Spleen (tissue), 13 donors: ENCODE measurements at regions of chr6 and their contacts with region 1.

Region 1: DNA sequence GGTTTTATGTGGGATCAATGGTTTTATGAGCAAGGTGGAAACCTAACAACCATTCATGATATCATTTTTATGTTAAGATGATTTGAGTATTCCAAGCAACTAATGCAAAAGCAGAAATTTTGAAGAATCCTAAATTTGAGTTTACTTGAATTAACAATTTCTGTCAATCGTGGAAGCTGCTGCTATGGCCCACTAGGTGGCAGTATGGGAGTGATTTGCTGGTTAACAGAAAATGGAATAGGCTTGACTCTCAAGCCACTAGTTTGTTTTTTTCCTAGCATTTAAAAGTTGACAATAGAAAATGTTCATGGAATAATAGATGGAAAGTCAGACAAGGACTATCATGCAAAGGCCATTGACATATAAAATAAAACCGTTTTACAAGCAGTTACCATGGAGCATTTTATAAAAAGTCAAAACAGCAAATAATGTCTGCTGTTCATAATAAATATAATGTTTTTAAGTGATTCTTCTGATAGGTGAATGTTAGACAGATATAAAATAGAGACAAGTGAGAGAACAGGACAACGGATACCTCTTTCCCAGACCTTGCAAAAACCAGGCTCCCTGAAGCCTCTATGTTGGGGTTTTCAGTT is 43.0 kb upstream of the TMEM200A start:
- DNase-seq: no peak
- H3K4me3 ChIP-seq: no peak overlapping the region
- H3K27ac ChIP-seq: no peak overlapping the region
- H3K4me1 ChIP-seq: peaks cover 0 to 6% (median 0%) of the 10 kb centered on the region in 6 donors
- H3K27me3 ChIP-seq: no peaks in the 10 kb centered on the region
- CTCF ChIP-seq: peak; percentile 32 to 84 (median 73)
- POLR2A ChIP-seq: no peak

Region 2: GRCh38 chr6:130620338-130620781 is 297.6 kb after region 1 on chr6:
- intact Hi-C with region 1: no loop called
- DNase-seq: no peak
- H3K4me3 ChIP-seq: no peak overlapping the region
- H3K27ac ChIP-seq: no peak overlapping the region
- H3K4me1 ChIP-seq: no peaks in the 10 kb centered on the region
- H3K27me3 ChIP-seq: no peaks in the 10 kb centered on the region
- CTCF ChIP-seq: no peak
- POLR2A ChIP-seq: no peak

Region 3: DNA sequence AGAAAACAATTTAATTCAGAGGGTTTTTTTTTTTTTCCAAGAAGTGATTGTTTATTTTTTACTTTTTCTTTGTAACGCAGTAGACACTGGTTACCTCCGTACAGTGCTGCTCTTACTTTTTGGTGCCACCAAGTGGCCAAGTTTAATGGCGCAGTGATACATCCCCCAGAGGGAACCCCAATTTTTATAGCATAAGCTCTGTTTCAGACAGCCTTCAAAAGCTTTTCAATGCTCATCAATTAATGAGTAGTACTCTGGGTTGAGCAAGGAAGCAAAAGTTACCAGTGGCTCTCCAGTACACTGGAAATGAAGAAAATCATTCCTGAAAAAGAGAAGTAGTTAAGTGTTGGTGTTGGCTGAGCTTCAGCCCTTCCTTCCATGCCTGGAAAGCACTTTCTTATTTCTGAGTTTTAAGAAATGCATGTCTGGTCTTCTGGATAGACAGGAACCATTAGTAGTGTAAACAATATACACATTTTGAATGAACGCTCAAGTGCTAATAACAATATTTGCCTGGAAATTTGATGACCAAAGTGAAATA is 375.3 kb after region 1 on chr6:
- intact Hi-C with region 1: loop called (anchors 10 kb)
- DNase-seq: no peak
- H3K4me3 ChIP-seq: no peak overlapping the region
- H3K27ac ChIP-seq: no peak overlapping the region
- H3K4me1 ChIP-seq: peaks cover 0 to 9% (median 0%) of the 10 kb centered on the region in 6 donors
- H3K27me3 ChIP-seq: peaks cover 0 to 13% (median 0%) of the 10 kb centered on the region in 7 donors
- CTCF ChIP-seq: peak in 10 of 11 experiments; percentile 6 to 74 (median 54)
- POLR2A ChIP-seq: no peak

Region 4: GRCh38 chr6:130872250-130873095 is 549.7 kb after region 1 on chr6:
- intact Hi-C with region 1: loop called (anchors 10 kb)
- DNase-seq: peak; percentile 88
- H3K4me3 ChIP-seq: no peak overlapping the region
- H3K27ac ChIP-seq: no peak overlapping the region
- H3K4me1 ChIP-seq: no peaks in the 10 kb centered on the region
- H3K27me3 ChIP-seq: no peaks in the 10 kb centered on the region
- CTCF ChIP-seq: peak; percentile 41 to 89 (median 78)
- POLR2A ChIP-seq: no peak